Natural killer cell (primary cell): ENCODE measurements at regions of chr15 and their contacts with region 1.

Region 1: DNA sequence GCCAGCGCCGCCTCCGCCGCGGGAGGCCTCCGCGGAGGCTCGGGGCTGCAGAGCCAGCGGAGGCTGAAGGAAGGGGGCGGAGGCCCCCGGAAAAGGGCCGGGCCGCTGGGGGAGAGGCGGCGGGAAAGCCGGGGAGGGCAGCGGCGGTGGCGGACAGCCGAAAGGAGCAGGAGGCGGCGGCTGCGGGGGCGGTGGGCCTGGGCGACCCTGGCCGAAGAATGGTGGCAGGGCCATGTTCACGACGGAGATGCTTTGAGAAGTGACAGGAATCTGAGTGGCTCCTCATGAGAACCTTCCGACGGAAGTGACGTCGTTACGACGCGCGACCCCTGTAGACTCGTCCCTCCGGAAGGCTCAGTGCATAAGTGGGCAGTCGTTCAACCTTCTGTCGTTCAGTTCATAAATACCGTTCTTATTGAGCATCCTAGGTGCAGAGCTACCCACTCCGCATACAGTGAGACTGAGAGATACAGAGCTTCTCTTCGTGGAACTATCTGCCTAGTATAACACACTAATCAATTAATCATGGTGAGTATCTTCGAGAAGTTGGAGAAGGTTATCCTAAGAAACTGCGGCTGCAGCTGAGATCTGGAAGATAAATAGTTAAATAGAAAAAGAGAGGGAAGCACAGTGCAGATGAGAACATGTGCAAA is at the start of gene PDCD7:
- DNase-seq: peak; percentile 79 to 95
- ATAC-seq: peak; percentile 92 to 94 (median 93)
- H3K4me3 ChIP-seq: peak within 1 kb of the TSS; percentile 69
- H3K4me3 Mint-ChIP-seq: peak within 1 kb of the TSS; percentile 97
- H3K27ac ChIP-seq: peak within 1 kb of the TSS; percentile 87
- H3K27ac Mint-ChIP-seq: peak within 1 kb of the TSS; percentile 97
- H3K4me1 ChIP-seq: peaks cover 17% of the 10 kb centered on the region
- H3K4me1 Mint-ChIP-seq: peaks cover 27 to 32% of the 10 kb centered on the region in 2 donors
- H3K27me3 ChIP-seq: no peaks in the 10 kb centered on the region
- H3K27me3 Mint-ChIP-seq: no peaks in the 10 kb centered on the region
- CTCF ChIP-seq: no peak
- total RNA-seq, gene PDCD7: 19.1 to 33.9 (median 26.7) TPM

Region 2: DNA sequence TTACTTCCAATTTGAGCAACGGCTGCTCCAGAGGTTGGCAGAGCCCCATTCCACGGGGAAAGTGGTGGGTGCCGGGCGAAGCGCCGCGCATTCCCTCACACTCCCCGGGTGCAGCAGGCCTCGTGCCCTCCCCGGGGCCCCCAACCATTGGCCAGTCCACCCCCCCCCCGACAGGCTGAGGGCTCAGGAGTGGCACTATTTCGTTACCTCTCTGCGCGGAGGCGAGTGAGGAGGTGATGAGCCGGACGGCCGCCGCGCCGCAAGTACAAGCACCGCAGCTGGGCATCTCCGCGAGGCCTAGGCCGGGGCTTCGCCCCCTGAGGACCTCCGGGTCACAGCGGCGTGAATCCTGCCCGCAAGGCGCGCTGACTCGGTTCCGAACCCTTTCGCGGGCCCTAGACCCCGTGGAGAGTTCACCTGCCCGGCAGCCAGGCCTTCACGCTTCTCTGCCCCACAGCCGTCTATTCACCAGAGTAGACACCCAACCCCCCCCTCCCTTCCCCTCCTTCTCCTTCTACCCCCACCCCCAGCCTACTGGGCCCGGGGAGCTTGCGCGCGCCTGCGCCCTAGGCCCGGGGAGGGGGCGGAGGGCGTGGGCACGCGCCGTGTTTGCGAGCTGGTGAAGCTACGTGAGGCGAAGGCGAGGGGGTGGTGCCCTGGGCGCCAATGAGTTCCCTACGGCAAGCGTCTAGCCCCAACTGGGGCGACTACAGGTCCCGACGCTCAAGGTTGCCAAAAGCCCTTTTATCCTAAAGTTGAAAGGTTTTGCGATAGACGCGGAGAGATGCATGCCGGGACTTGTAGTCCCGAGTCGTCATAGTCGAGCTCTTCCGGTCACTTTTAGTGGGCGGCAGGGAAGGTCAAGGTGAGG is 51.4 kb after region 1 on chr15 and contains the start of gene CLPX:
- intact Hi-C with region 1: loop called (anchors 10 kb)
- DNase-seq: peak; percentile 80 to 97
- ATAC-seq: peak; percentile 88 to 96 (median 91)
- H3K4me3 ChIP-seq: peak within 1 kb of the TSS; percentile 68
- H3K4me3 Mint-ChIP-seq: peak within 1 kb of the TSS; percentile 93
- H3K27ac ChIP-seq: peak within 1 kb of the TSS; percentile 76
- H3K27ac Mint-ChIP-seq: peak within 1 kb of the TSS; percentile 91 to 92
- H3K4me1 ChIP-seq: peaks cover 24% of the 10 kb centered on the region
- H3K4me1 Mint-ChIP-seq: peaks cover 26 to 31% of the 10 kb centered on the region in 2 donors
- H3K27me3 ChIP-seq: no peaks in the 10 kb centered on the region
- H3K27me3 Mint-ChIP-seq: no peaks in the 10 kb centered on the region
- CTCF ChIP-seq: no peak
- total RNA-seq, gene CLPX: 35.4 to 39.9 (median 38.2) TPM

Region 3: GRCh38 chr15:65292938-65293518 is 159.4 kb after region 1 on chr15:
- intact Hi-C with region 1: loop called (anchors 1 kb)
- DNase-seq: no peak
- ATAC-seq: no peak
- H3K4me3 ChIP-seq: no peak overlapping the region
- H3K4me3 Mint-ChIP-seq: no peak overlapping the region
- H3K27ac ChIP-seq: no peak overlapping the region
- H3K27ac Mint-ChIP-seq: peak overlapping the region in 1 of 2 donors; percentile 49
- H3K4me1 ChIP-seq: peaks cover 23% of the 10 kb centered on the region
- H3K4me1 Mint-ChIP-seq: peaks cover 11 to 23% of the 10 kb centered on the region in 2 donors
- H3K27me3 ChIP-seq: no peaks in the 10 kb centered on the region
- H3K27me3 Mint-ChIP-seq: no peaks in the 10 kb centered on the region
- CTCF ChIP-seq: no peak

Region 4: DNA sequence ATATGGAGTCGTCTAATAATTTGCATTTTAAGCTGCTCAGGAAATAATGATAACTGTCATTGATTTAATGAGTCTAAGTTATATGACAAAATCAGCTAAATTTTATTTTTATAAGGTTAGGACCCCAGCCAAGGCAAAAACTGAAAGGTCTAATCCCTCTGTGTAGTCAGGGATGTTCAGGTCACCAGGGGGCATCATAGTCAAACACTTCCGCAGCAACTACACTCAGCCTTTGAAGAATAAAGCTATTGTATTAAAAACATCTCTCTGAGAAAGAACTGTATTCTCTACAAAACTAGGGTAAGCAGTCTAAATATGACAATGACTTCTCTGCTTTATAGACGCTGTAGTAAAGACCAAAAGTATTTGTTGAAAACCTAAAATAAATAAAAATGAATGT is 462.3 kb after region 1 on chr15:
- intact Hi-C with region 1: no loop called
- DNase-seq: peak in 1 of 2 donors; percentile 59
- ATAC-seq: no peak
- H3K4me3 ChIP-seq: no peak overlapping the region
- H3K4me3 Mint-ChIP-seq: no peak overlapping the region
- H3K27ac ChIP-seq: no peak overlapping the region
- H3K27ac Mint-ChIP-seq: no peak overlapping the region
- H3K4me1 ChIP-seq: no peaks in the 10 kb centered on the region
- H3K4me1 Mint-ChIP-seq: no peaks in the 10 kb centered on the region
- H3K27me3 ChIP-seq: no peaks in the 10 kb centered on the region
- H3K27me3 Mint-ChIP-seq: no peaks in the 10 kb centered on the region
- CTCF ChIP-seq: no peak